Pancreas (tissue), 10 donors: ENCODE measurements at regions of chr7 and their contacts with region 1.

Region 1: GRCh38 chr7:155815332-155816191 is 3.3 kb upstream of the SHH start:
- DNase-seq: peak; percentile 44 to 91 (median 74)
- ATAC-seq: peak; percentile 87 to 98 (median 90)
- H3K4me3 ChIP-seq: no peak overlapping the region
- H3K27ac ChIP-seq: no peak overlapping the region
- H3K4me1 ChIP-seq: no peaks in the 10 kb centered on the region
- H3K27me3 ChIP-seq: peaks cover 0 to 24% (median 2%) of the 10 kb centered on the region in 4 donors
- CTCF ChIP-seq: peak in 3 of 4 donors; percentile 57 to 64 (median 60)

Region 2: DNA sequence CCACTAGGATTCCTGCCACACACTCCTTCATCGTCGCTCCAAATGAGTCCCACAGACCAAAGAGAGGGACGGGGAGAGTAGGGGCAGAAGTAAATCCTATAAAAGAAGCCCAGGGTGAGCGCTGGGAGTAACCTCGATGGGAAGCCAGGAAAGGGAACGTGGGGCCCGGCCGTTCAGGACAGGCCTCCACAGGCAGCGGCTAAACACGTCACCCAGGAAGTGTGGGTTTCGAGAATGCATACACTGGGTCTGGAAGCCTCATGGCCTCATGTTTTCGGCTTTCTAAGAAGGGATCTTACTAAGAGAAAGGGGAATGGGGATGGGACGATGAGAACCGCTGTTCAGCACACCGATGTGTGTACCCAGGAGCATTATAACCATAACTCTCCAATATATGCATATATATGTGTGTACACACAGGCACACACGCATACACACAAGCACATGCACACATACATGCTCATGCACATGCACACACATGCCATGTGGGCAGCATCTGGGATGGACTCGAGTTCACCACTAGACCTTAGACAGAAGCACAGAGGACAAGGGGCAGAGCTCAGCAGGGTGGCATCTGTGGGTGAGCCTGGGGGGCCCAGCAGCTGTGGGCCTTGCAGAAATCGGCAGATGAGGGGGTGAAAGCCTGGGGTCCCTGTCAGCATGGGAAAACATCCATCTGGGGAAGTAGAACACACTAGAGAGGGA is 254.4 kb before region 1 on chr7:
- intact Hi-C with region 1: no loop called
- DNase-seq: peak in 2 of 6 donors; percentile 13 to 26
- ATAC-seq: no peak
- H3K4me3 ChIP-seq: no peak overlapping the region
- H3K27ac ChIP-seq: no peak overlapping the region
- H3K4me1 ChIP-seq: no peaks in the 10 kb centered on the region
- H3K27me3 ChIP-seq: no peaks in the 10 kb centered on the region
- CTCF ChIP-seq: no peak

Region 3: DNA sequence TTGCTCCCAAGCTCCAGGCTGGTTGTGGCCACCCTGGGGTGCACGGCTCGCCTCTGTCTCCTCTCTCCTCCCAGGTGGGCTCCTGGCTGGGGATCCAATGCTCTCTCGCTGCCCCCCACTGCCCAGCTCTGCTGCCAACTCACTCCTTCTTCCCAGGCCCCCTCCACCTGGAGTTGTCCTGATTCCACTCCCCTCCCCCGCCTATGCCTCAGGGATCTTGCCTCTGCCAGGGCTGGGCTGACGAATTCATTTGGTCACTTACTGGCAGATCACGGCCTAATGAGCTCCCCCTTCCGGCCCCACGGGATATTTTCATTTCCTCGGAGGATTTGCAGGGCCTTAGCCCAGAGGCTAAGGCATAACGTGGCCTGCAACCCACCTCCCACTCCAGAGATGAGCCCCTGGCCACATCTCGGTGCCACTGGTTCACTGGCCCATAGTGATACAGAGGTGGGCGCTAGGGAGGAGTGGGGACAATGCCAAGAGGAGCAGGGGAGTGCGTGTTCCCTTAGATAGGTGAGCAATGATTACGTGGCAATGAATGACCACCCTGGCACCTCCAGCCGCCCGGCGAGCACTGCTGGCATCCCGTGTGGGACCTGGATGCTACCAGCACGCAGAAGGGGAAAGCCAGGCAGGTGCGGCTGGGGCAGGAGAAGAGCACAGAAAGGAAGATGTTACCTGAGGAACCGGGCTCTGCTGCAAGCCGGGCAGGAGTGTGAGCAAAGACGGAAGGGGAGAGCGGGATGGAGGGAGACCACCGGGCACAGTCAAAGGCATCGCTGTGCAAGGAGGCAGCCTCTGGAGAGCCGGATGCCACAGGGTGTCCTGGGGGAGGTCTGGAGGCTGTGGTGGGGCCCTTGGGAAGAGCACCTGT is 341.4 kb after region 1 on chr7:
- intact Hi-C with region 1: loop called in 1 of 3 experiments (anchors 10 kb)
- DNase-seq: peak in 3 of 6 donors; percentile 20 to 49 (median 46)
- ATAC-seq: peak; percentile 74 to 82 (median 78)
- H3K4me3 ChIP-seq: no peak overlapping the region
- H3K27ac ChIP-seq: no peak overlapping the region
- H3K4me1 ChIP-seq: no peaks in the 10 kb centered on the region
- H3K27me3 ChIP-seq: no peaks in the 10 kb centered on the region
- CTCF ChIP-seq: no peak

Region 4: GRCh38 chr7:156473476-156474240 is 658.1 kb after region 1 on chr7:
- intact Hi-C with region 1: loop called (anchors 5 to 10 kb)
- DNase-seq: peak in 4 of 6 donors; percentile 12 to 71 (median 42)
- ATAC-seq: peak; percentile 46 to 82 (median 78)
- H3K4me3 ChIP-seq: no peak overlapping the region
- H3K27ac ChIP-seq: no peak overlapping the region
- H3K4me1 ChIP-seq: no peaks in the 10 kb centered on the region
- H3K27me3 ChIP-seq: no peaks in the 10 kb centered on the region
- CTCF ChIP-seq: peak in 3 of 4 donors; percentile 48 to 56 (median 52)

Region 5: GRCh38 chr7:156764016-156764669 is 948.6 kb after region 1 on chr7:
- intact Hi-C with region 1: loop called in 1 of 3 experiments (anchors 10 kb)
- DNase-seq: peak; percentile 47 to 86 (median 64)
- ATAC-seq: peak; percentile 90 to 100 (median 99)
- H3K4me3 ChIP-seq: no peak overlapping the region
- H3K27ac ChIP-seq: no peak overlapping the region
- H3K4me1 ChIP-seq: no peaks in the 10 kb centered on the region
- H3K27me3 ChIP-seq: no peaks in the 10 kb centered on the region
- CTCF ChIP-seq: peak in 3 of 4 donors; percentile 57 to 66 (median 65)